AG04449 (cell line): ENCODE measurements at regions of chr1 and their contacts with region 1.

Region 1: DNA sequence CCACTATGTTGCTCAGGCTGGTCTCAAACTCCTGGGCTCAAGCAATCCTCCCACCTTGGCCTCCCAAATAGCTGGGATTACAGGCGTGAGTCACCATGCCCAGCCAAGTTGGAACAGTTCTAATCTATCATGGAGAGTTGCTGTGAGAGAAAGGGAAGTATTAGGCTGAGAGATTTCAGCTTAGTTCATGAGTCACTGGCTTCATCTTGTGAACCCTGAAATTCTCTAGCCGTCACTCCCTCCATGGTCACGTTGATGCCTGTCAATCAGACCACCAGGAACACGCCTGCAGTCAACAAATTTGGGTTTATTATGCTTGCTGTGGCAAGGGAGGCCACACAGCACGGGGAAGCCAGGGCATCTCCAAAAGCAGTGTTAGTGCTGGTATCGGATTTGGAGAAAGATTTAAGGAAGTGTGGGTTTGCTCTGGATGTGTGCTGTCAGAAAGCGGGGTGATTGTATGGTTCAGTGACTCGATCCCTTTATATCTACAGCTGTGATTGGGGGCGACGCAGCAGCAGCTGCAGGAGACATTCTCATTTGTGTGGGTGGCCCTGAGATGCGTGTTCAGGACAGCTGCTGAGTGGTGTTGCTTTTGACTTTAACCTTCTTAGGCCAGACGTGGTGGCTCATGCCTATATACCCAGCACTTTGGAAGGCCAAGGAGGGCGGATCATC is 18.7 kb downstream of the UQCRHL start:
- DNase-seq: no peak
- H3K4me3 ChIP-seq: no peak overlapping the region
- CTCF ChIP-seq: no peak

Region 2: DNA sequence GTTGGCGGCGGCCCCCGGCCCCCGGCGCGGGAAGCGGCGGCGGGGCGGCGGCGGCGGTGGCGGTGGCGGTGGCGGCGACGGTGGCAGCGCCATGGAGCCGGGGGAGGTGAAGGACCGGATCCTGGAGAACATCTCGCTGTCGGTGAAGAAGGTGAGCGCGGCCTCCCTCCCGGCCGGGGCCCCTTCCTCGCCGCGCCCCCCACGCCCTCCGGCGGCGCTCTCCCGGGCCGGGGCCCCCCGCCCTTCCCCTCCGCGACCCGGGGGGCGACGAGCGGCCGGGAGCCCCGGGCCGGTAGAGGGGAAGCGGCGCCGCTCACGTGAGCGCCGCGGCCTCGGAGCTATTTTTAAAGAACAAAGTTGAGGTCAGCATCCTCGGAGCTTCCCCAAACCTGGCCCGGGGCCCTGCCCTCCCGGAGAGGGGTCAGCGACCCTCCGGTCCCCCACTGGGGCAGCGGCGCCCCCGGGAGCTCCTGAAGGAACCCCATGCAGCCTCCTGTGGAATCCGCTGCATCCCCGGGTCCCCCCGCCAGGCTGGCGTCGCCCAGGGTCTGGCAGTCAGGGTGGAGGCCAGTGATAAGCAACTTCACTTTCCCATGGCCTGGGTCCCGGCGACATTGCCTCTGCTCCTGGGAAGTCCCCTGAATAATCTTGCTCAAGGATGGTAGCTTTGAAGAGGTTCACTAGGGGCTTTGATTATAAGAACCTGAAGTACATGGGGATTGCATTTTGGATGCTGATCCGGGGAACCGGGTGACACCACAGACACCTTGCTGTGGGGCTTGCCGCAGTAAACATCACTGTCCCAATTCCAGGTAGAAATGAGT is 104.1 kb before region 1 on chr1:
- CTCF ChIA-PET with region 1: no interaction called
- POLR2A ChIA-PET with region 1: no interaction called
- DNase-seq: no peak
- H3K4me3 ChIP-seq: peak overlapping the region; percentile 74
- CTCF ChIP-seq: no peak

Region 3: DNA sequence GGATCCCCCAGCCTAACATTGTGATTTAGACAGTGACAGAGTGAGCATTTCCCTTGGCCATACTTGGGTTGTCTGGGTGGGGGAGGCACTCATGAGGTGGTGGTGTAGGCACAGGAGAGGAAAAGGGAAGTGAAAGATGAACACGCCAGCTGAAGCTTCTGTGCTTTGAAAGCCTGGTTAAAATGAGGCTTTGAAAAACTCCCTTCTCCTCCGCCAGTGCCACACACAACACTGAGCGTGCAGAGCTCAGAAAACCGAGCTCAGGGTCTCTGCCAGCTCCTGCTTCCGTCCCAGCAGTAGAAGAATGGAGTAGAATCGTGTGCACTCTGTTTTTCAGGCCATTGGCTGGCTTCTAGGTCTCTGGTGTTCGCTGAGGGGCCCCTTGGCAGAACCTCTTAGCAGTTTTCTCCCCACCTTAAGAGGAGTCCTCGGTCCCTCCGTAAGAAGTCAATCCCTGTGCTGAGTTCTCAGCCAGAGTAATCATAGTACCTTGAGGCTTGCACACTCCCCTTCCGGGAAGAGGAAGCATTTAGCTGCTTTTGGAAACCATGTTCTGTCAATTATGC is 91.7 kb before region 1 on chr1:
- CTCF ChIA-PET with region 1: no interaction called
- POLR2A ChIA-PET with region 1: no interaction called
- DNase-seq: no peak
- H3K4me3 ChIP-seq: no peak overlapping the region
- CTCF ChIP-seq: no peak

Region 4: GRCh38 chr1:15723631-15724251 is 65.0 kb before region 1 on chr1:
- CTCF ChIA-PET with region 1: no interaction called
- POLR2A ChIA-PET with region 1: no interaction called
- DNase-seq: no peak
- H3K4me3 ChIP-seq: no peak overlapping the region
- CTCF ChIP-seq: no peak

Region 5: DNA sequence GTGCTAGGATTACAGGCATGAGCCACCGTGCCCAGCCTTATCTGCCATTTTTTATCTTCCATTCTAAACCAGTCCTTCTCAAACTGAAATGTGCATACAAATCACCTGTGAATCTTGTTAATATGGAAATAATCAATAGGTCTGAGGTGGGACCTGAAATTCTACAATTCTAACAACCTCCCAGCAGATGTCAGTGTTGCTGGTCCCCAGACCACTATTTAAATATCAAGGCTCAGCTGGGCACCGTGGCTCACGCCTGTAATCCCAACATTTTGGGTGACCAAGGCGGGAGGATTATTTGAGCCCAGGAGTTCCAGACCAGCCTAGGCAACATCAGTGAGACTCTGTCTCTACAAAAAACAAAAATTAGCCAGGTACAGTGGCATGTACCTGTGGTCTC is 14.6 kb after region 1 on chr1:
- CTCF ChIA-PET with region 1: interaction called, 15 read pairs
- POLR2A ChIA-PET with region 1: interaction called, 3 read pairs
- DNase-seq: no peak
- H3K4me3 ChIP-seq: no peak overlapping the region
- CTCF ChIP-seq: peak; percentile 28

Region 6: DNA sequence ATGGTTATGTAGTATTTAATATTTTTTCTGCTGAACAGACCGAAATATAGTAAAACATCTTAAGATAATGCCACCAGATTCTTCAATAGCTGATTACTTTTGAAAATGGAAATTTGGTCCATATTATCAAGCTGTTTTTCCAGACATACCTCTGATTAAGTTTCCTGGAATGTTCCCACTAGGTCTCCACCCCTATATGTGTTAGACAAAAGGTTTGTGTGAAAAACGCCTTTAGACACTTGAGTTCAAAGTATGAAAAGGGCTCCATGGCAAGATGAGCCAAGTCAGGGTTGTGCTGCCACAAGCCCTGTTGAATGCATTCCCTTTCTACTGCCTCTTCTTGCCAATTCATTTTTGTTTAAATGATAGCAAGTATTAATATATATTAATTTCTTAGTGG is 134.5 kb after region 1 on chr1:
- CTCF ChIA-PET with region 1: interaction called, 29 read pairs
- POLR2A ChIA-PET with region 1: no interaction called
- DNase-seq: no peak
- H3K4me3 ChIP-seq: no peak overlapping the region
- CTCF ChIP-seq: no peak

Region 7: DNA sequence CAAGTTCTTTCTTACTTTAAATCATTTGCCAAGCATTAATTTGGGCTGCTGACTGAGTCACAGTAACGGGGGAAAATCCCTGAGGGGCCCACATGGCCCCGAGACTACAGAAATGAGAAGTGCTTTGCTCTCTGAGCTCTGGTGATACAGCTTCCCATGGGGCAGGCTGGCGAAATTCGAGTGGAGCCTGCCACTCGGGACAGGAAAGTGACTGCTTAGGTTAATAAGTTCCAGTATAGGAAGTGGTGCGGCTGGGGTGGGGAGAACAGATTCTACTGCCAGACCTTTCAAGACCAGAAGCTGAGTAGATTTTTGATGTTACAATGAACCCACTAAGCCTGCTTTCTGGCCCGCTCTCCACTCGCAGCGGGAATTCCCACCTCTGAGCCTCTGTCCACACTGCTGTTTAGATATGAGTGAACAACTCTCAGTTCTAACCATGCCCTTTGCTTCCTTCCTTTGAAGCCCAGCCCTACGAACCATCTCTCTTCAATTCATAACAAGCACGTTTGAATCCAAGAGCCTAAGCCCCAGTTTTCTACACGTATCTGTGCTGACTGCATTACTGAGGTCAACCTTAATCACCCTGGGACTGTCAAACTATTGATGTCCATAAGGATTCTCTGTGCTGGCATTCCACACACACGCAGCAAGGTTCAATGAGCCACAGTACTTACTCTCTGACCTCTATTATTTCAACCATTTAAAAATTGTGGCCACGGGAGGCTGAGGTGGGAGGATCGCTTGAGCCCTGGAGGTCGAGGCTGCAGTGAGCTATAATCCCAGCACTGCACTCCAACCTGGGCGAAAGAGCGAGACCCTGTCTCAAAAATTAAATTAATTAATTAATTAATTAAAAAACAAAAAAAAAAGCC is 177.6 kb after region 1 on chr1:
- CTCF ChIA-PET with region 1: interaction called, 11 read pairs
- POLR2A ChIA-PET with region 1: no interaction called
- DNase-seq: no peak
- H3K4me3 ChIP-seq: no peak overlapping the region
- CTCF ChIP-seq: no peak

Region 8: DNA sequence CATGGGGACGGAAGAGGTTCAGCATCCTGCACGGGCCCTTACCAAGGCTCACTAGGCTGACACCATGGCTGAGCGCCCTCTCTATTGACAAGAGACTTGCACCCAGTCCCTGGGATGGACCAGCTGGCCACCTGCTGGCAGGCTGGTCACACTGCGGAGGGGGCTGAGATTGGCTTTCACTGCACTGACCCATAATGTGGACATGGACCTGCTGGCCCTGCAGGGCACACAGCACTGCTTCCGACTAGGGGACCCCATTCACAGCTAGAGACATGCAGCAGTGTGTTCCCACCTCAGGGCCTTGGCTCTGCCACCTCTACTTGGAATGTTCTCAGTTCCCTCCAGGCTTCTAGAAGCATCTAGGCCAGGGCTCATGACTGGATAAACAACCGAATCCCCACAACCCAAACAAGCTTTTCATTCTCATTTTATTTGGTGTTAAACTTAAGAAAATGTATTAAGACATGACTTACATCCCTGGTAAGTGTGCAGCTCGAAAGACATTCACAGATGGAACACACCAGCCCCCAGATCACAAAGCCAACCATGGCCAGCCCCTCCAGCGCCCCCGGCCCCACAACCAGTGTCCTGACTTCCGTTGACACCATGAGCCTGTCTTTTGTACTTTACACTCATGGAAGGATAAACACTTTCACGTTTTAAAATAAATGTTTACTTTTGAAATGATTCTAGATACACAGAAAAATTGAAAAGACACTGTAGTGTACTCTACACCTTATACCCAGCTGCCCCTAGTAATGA is 206.0 kb after region 1 on chr1:
- CTCF ChIA-PET with region 1: interaction called, 79 read pairs
- POLR2A ChIA-PET with region 1: no interaction called
- DNase-seq: no peak
- H3K4me3 ChIP-seq: no peak overlapping the region
- CTCF ChIP-seq: peak; percentile 94

Region 9: DNA sequence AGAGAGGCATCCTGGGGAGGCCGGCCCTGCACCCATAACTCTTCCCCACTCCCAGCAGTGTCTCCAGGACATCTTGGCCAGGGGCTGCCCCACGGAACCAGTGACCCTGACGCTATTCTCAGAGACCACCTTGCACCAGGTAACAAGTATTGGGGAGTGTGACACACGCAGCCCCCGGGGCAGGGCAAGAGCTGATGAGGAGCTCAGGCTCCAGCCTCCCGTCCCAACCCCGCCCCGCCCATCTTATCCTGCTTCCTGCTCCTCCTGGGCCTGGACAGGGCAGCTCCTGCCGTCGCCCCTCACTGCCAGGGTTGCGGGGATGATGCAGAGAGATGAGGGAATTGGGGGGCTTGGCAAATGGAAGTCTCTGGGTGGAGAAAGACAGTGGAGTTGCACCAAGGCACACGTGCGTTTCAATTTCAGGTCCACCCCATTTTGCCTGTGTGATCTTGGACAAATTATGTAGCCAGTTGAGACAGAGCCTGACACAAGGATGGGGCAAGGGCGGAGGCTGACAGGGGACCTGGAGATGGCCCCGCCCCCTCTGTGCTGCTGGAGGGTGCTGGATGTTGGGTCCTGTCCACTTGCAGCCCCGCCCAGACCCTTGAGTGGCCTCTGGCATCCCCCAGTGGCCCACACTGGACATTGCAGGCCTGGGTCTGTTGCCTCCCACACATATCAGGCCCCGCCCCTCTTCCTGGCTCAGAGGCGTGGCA is 243.8 kb after region 1 on chr1:
- CTCF ChIA-PET with region 1: interaction called, 14 read pairs
- POLR2A ChIA-PET with region 1: no interaction called
- DNase-seq: no peak
- H3K4me3 ChIP-seq: no peak overlapping the region
- CTCF ChIP-seq: peak; percentile 99

Region 10: DNA sequence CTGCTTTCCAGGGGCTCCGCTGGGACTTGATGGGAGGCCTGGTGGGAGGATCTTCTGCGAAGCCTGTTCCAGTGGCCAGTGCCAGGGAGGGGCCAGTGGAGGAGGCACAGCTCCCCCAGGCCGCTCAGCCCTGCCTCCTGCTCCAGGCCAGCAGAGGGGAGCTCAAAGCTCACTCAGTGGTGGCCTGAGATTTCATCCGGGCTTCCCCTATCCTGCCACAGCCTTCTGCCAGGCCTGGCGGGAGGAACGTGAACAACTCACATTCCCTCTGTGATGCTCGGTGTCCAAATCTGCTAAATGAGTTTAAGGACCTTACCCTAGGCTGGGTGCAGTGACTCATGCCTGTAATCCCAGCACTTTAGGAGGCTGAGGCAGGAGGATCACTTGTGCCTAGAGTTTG is 258.1 kb after region 1 on chr1:
- CTCF ChIA-PET with region 1: no interaction called
- POLR2A ChIA-PET with region 1: no interaction called
- DNase-seq: no peak
- H3K4me3 ChIP-seq: no peak overlapping the region
- CTCF ChIP-seq: no peak